T-cell (primary cell): ENCODE measurements at regions of chr5 and their contacts with region 1.

Region 1: DNA sequence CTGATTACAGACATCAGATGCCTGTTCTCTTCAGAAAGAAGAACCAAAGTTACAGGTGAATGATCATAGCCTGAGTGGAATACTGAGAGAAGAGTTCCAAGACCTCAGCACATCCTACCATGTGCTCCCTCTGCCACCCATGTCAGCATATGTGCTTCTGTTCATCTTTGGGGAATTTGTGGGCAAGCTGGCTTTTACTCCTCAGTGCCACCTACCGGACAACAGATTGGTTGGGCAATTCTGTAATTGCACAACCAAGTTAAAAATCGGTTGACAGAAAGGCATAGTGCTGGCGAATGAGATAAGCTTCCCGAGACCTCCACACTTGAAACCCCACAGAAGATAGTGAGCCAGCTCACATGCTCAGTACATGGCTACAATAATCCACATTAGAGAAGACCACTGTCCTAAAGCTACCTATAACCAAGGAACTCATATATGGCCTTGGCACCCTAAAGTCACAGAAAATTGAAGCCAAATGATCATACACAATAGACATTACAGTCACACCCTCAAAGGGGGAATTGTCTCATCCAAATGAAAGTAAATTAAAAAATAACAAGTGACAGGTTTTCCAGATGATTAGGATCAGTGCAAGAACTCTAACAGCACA is 1238.0 kb upstream of the NUDT12 start:
- DNase-seq: no peak
- ATAC-seq: no peak
- H3K4me3 ChIP-seq: no peak overlapping the region
- H3K4me3 Mint-ChIP-seq: no peak overlapping the region
- H3K27ac ChIP-seq: no peak overlapping the region
- H3K27ac Mint-ChIP-seq: no peak overlapping the region
- H3K4me1 ChIP-seq: no peaks in the 10 kb centered on the region
- H3K4me1 Mint-ChIP-seq: no peaks in the 10 kb centered on the region
- H3K27me3 ChIP-seq: no peaks in the 10 kb centered on the region
- H3K27me3 Mint-ChIP-seq: no peaks in the 10 kb centered on the region

Region 2: DNA sequence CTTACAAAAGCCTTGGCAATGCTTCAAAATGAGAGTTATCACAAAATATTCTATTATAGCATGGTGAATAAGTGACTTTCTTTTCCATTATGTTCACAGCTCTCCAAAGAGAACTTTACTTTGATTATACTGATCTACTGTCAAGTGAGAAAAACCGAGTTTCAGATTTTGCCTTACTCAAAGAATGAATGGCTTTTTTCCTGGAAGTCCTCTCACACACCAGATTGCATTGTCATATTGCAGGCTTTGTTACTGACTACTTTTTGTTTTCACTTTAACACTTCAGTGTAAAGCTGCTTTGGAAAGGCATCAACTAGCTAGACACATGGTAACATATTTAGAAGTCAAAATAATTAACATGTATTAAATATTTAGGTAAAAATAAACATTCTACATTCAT is 472.7 kb before region 1 on chr5:
- CTCF ChIA-PET with region 1: interaction called in 1 of 2 experiments, 10 read pairs
- POLR2A ChIA-PET with region 1: no interaction called
- DNase-seq: no peak
- ATAC-seq: no peak
- H3K4me3 ChIP-seq: no peak overlapping the region
- H3K4me3 Mint-ChIP-seq: no peak overlapping the region
- H3K27ac ChIP-seq: no peak overlapping the region
- H3K27ac Mint-ChIP-seq: no peak overlapping the region
- H3K4me1 ChIP-seq: no peaks in the 10 kb centered on the region
- H3K4me1 Mint-ChIP-seq: no peaks in the 10 kb centered on the region
- H3K27me3 ChIP-seq: no peaks in the 10 kb centered on the region
- H3K27me3 Mint-ChIP-seq: no peaks in the 10 kb centered on the region